ENCODE measurements at regions of chr7 and their contacts with region 1.

Region 1: GRCh38 chr7:140358412-140359051 is 39.8 kb downstream of the SLC37A3 start:
- DNase-seq: peak in 4 of 5 donors; percentile 16 to 41 (median 20)
- H3K4me3 ChIP-seq: peak overlapping the region in 1 of 2 donors; percentile 9
- H3K4me3 Mint-ChIP-seq: peak overlapping the region; percentile 85 to 96 (median 90)
- H3K27ac ChIP-seq: peak overlapping the region; percentile 42
- H3K27ac Mint-ChIP-seq: peak overlapping the region; percentile 59 to 94 (median 86)
- H3K4me1 ChIP-seq: peaks cover 23% of the 10 kb centered on the region
- H3K4me1 Mint-ChIP-seq: peaks cover 20 to 29% (median 24%) of the 10 kb centered on the region in 4 donors
- H3K27me3 ChIP-seq: no peaks in the 10 kb centered on the region
- H3K27me3 Mint-ChIP-seq: no peaks in the 10 kb centered on the region

Region 2: GRCh38 chr7:139762886-139763285 is 595.6 kb before region 1 on chr7:
- CTCF ChIA-PET with region 1: no interaction called
- POLR2A ChIA-PET with region 1: no interaction called
- intact Hi-C with region 1: no loop called
- DNase-seq: no peak
- H3K4me3 ChIP-seq: no peak overlapping the region
- H3K4me3 Mint-ChIP-seq: peak overlapping the region in 2 of 8 donors; percentile 9 to 67
- H3K27ac ChIP-seq: no peak overlapping the region
- H3K27ac Mint-ChIP-seq: peak overlapping the region in 2 of 7 donors; percentile 25 to 46
- H3K4me1 ChIP-seq: peaks cover 17% of the 10 kb centered on the region
- H3K4me1 Mint-ChIP-seq: peaks cover 48 to 69% (median 59%) of the 10 kb centered on the region in 4 donors
- H3K27me3 ChIP-seq: no peaks in the 10 kb centered on the region
- H3K27me3 Mint-ChIP-seq: no peaks in the 10 kb centered on the region

Region 3: DNA sequence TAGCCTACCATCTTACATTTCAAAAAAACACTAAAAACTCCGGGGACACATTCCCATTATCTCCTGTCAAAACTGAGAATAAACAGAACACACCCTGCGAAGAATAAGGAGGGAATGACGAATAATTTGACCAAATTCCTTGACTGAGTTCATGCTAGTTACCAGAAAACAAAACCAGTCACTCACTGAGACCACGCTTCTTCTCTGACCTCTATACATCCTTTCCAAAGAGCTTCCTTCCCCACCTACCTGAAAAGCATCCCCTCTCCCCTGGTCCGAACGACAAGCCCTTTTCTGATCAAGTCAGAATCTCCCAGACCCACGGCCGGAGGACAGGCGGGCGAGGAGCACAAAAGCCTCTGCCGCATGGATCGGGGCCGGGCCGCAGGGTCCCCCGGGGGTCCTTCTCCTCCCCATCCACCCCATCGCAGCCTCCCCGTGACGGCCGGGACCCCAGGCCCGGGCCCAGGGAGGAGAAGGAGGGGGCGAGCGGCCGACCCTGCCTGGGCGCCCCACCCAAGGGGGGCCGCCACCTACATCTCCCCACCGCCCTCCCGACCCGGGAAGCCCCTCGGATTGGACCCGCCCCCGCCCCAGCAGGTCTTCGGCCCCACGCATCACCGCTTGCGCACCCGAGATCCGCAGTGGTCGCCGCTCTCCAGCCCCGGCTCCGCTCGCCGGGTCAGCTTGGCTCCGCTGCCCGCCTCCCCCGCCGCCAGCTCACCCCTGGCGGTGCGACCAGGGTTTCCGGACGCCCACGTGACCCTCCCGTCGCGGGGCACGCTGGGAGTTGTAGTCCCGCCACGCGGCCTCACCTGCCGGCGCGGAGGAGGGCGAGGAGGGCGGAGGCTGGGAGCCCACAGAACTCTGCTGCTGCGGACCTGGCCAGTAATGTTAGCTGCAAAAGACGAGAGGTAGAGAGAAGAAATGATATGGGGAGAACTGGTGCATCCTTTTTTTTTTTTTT is 39.5 kb after region 1 on chr7 and contains the start of gene SLC37A3:
- CTCF ChIA-PET with region 1: no interaction called
- POLR2A ChIA-PET with region 1: no interaction called
- intact Hi-C with region 1: loop called (anchors 2 kb)
- DNase-seq: peak; percentile 77 to 85 (median 81)
- H3K4me3 ChIP-seq: peak within 1 kb of the TSS; percentile 33 to 63
- H3K4me3 Mint-ChIP-seq: peak within 1 kb of the TSS; percentile 90 to 95 (median 90)
- H3K27ac ChIP-seq: peak within 1 kb of the TSS; percentile 77
- H3K27ac Mint-ChIP-seq: peak within 1 kb of the TSS; percentile 71 to 94 (median 88)
- H3K4me1 ChIP-seq: peaks cover 21% of the 10 kb centered on the region
- H3K4me1 Mint-ChIP-seq: peaks cover 16 to 26% (median 20%) of the 10 kb centered on the region in 4 donors
- H3K27me3 ChIP-seq: no peaks in the 10 kb centered on the region
- H3K27me3 Mint-ChIP-seq: no peaks in the 10 kb centered on the region
- total RNA-seq, gene SLC37A3: 32.5 to 42.5 TPM

Region 4: GRCh38 chr7:140456551-140457051 is 98.1 kb after region 1 on chr7:
- CTCF ChIA-PET with region 1: no interaction called
- POLR2A ChIA-PET with region 1: no interaction called
- intact Hi-C with region 1: loop called (anchors 10 kb)
- DNase-seq: no peak
- H3K4me3 ChIP-seq: no peak overlapping the region
- H3K4me3 Mint-ChIP-seq: no peak overlapping the region
- H3K27ac ChIP-seq: no peak overlapping the region
- H3K27ac Mint-ChIP-seq: no peak overlapping the region
- H3K4me1 ChIP-seq: no peaks in the 10 kb centered on the region
- H3K4me1 Mint-ChIP-seq: peaks cover 20 to 46% (median 24%) of the 10 kb centered on the region in 4 donors
- H3K27me3 ChIP-seq: no peaks in the 10 kb centered on the region
- H3K27me3 Mint-ChIP-seq: no peaks in the 10 kb centered on the region

Region 5: DNA sequence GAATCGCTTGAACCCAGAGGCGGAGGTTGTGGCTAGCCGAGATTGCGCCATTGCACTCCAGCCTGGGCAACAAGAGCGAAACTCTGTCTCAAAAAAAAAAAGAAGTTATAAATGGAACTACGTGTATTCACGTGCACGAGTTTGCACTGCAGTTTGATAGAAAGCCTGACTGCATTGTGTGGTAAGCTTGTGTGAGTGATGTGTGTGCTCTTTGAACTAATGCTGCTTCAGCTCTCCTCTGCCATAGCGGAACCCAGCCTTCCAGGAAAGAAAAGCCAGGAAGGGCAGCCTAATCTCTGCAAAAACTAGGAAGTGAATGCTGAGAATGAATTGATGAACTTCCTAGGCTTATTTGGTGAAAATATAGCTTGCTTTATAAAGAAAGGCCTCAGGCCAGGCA is 136.3 kb after region 1 on chr7:
- CTCF ChIA-PET with region 1: interaction called, 5 read pairs
- POLR2A ChIA-PET with region 1: no interaction called
- intact Hi-C with region 1: loop called (anchors 2 kb)
- DNase-seq: no peak
- H3K4me3 ChIP-seq: no peak overlapping the region
- H3K4me3 Mint-ChIP-seq: no peak overlapping the region
- H3K27ac ChIP-seq: no peak overlapping the region
- H3K27ac Mint-ChIP-seq: no peak overlapping the region
- H3K4me1 ChIP-seq: no peaks in the 10 kb centered on the region
- H3K4me1 Mint-ChIP-seq: peaks cover 0 to 2% (median under 1%) of the 10 kb centered on the region in 4 donors
- H3K27me3 ChIP-seq: no peaks in the 10 kb centered on the region
- H3K27me3 Mint-ChIP-seq: no peaks in the 10 kb centered on the region

Measured in CD4-positive, alpha-beta memory T cell (primary cell).